ENCODE measurements at regions of chr22 and their contacts with region 1.

Region 1: DNA sequence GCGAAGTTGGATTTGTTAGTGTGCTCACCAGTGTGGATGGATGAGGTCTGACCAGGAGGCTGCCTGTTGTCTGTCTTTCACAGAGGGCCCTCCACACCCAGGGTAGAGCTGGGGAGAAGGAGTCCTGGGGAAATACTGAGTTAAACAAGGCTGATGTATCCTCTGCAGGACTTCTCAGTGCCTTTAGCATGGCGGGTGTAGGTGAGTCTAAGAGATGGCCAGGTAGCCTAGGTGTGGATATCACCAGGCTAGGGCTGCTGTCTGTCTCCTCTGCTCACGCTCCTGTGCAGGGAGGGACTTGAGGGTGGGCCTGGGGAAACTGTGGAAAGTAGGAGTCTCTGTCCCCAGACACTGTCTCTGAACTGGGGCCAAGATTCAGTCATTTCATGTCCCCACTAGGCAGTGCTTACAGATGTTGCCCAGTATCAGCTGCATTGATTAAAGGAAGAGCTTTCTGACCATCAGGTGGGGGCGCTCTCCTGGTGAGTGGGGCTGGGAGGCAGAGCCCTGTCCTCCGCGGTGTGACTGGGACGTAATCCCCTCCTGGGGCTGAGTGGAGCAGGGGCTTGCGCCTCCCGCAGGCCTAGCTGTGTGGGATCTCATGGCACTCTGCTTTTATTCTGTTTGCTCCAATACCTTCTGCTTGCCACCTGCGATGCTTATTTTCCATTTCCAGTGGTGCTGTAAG is 35.5 kb upstream of the CCDC188 start:
- DNase-seq: peak; percentile 81
- ATAC-seq: peak; percentile 95
- H3K4me3 Mint-ChIP-seq: no peak overlapping the region
- H3K27ac Mint-ChIP-seq: no peak overlapping the region
- H3K4me1 Mint-ChIP-seq: no peaks in the 10 kb centered on the region
- H3K27me3 Mint-ChIP-seq: no peaks in the 10 kb centered on the region
- CTCF ChIP-seq: no peak

Region 2: GRCh38 chr22:20219667-20220628 is 33.6 kb after region 1 on chr22:
- CTCF ChIA-PET with region 1: interaction called, 12 read pairs
- POLR2A ChIA-PET with region 1: no interaction called
- DNase-seq: no peak
- ATAC-seq: peak; percentile 54
- H3K4me3 Mint-ChIP-seq: no peak overlapping the region
- H3K27ac Mint-ChIP-seq: no peak overlapping the region
- H3K4me1 Mint-ChIP-seq: no peaks in the 10 kb centered on the region
- H3K27me3 Mint-ChIP-seq: peaks cover 3% of the 10 kb centered on the region; the same call in 1 of the 2 replicates
- CTCF ChIP-seq: no peak